ENCODE measurements at regions of chr12 and their contacts with region 1.

Region 1: DNA sequence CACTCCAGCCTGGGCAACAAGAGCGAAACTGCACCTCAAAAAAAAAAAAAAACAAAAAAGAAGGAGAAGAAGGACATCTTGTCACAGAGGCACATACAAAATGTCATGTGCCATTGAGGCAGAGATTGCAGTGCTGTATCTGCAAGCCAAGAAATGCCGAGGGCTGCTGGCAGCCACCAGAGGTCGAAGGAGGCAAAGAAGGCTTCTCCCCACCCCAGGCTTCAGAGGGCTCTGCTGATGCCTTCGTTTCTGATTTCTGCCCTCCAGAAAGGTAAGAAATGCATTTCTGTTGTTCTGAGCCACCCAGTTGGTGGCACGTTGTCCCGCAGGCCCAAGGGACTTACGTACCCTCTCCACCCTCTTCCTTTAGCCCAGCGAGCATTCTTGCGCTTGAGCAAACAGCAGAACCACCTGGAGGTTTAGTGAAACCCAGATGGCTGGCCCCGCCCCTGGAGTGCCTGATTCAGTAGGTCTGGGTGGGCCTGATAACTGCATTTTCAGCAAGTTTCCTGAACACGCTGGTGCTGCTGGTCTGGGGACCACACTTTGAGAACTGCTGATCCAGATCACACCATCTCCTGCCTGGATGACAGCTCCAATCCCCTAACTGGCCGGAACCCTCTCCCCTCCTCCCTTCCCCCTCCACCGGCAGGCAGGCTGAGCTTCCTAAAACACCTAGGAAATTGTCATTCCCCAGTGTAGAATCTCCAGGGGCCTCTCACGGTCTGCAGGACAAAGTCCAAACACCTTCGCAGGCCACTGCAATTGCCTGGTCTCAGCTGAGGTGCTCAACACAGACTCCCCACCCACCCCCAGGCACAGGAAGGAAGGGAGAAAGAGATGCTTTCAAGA is 21.1 kb upstream of the SCARB1 start:
- DNase-seq: peak; percentile 65 to 88 (median 83)
- H3K4me3 ChIP-seq: peak overlapping the region in 3 of 7 experiments; percentile 43 to 59 (median 44)
- H3K27ac ChIP-seq: no peak overlapping the region
- H3K4me1 ChIP-seq: peaks cover 3 to 33% (median 27%) of the 10 kb centered on the region in 4 experiments
- H3K27me3 ChIP-seq: no peaks in the 10 kb centered on the region

Region 2: DNA sequence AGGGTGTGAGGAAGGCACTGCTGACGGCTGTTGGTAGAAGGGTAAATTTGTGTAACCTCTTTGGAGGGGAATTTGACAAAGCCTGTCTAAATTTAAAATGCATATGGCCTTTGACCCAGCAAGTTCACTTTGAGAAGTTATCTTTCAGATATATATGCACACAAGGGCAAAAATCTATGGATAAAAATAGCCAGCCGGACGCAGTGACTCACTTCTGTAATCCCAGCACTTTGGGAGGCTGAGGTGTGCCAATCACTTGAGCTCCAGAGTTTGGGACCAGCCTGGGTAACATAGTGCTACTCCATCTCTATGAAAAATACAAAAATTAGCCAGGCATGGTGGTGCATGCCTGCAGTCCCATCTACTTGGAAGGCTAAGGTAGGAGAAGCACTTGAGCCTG is 16.2 kb after region 1 on chr12:
- CTCF ChIA-PET with region 1: interaction called, 16 read pairs
- POLR2A ChIA-PET with region 1: no interaction called
- DNase-seq: no peak
- H3K4me3 ChIP-seq: no peak overlapping the region
- H3K27ac ChIP-seq: no peak overlapping the region
- H3K4me1 ChIP-seq: peaks cover 0 to 12% (median 4%) of the 10 kb centered on the region in 4 experiments
- H3K27me3 ChIP-seq: no peaks in the 10 kb centered on the region

Region 3: DNA sequence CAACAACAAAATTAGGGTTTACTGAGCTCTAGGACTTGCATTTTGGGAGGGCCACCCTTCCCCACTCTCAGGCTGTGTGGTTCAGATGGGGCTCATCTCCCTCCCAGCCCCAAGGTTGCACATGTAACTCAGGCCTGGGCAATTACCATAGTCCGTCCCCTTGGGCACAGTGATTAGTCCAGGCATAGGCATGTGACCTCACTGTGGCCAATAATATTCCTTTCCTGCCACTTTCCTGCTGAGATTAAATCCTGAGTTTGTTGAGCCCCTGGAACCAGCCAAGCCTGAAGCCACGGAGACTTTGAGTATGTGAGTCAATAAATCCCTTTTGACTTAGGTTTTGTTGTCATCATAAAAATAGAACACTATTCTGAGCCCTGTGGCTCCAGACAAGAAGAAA is 293.4 kb after region 1 on chr12:
- CTCF ChIA-PET with region 1: no interaction called
- POLR2A ChIA-PET with region 1: no interaction called
- DNase-seq: no peak
- H3K4me3 ChIP-seq: no peak overlapping the region
- H3K27ac ChIP-seq: no peak overlapping the region
- H3K4me1 ChIP-seq: peaks cover 0 to under 1% (median 0%) of the 10 kb centered on the region in 4 experiments
- H3K27me3 ChIP-seq: peaks cover 4 to 28% (median 5%) of the 10 kb centered on the region in 5 experiments